Activated CD4-positive, alpha-beta T cell treated with anti-CD3 and anti-CD28 coated beads, Interleukin-2, amount 10 ng/mL, durations not matched to agents 24 days and 14 days (primary cell): ENCODE measurements at regions of chr3 and their contacts with region 1.

Region 1: DNA sequence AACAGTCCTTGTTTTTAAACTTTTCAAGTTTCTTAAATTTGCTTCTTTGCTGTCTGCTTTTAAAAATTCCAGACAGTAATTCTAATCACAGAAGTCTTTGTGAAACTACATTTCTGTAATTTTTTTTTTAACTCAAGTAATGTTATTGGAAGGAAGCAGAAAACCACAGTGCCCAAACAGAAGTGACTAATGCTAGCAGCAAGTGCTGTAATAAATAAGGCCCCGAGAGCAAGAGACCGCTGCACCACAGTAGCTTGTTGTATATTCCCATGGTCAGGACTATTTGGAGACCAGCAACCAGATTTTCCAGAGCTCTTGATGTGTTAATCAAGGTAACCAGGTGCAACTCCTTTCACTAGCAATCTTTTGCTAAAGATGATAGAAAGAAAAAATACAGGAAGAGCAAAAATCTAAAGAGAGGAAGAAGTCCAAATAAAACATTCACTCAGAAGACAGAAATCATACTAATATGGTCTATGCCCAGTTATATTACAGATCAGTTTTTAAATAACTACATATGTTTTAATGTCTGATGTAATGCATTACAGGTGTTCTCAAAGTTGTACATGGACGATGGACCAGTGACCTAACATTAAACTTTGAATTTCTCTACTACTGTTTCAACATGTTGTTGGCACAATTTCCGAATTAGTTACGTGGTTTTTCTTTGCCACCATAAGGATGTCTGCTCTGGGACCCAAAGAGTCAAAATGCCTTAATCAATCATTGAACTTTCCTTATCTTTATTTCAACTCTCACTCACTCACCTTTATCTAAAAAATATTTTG is 36.4 kb downstream of the WWTR1 start:
- DNase-seq: peak; percentile 62
- H3K4me3 Mint-ChIP-seq: peak overlapping the region; percentile 55
- H3K27ac Mint-ChIP-seq: peak overlapping the region; percentile 37
- H3K4me1 Mint-ChIP-seq: peaks cover 18% of the 10 kb centered on the region
- H3K27me3 Mint-ChIP-seq: peaks cover 13% of the 10 kb centered on the region

Region 2: DNA sequence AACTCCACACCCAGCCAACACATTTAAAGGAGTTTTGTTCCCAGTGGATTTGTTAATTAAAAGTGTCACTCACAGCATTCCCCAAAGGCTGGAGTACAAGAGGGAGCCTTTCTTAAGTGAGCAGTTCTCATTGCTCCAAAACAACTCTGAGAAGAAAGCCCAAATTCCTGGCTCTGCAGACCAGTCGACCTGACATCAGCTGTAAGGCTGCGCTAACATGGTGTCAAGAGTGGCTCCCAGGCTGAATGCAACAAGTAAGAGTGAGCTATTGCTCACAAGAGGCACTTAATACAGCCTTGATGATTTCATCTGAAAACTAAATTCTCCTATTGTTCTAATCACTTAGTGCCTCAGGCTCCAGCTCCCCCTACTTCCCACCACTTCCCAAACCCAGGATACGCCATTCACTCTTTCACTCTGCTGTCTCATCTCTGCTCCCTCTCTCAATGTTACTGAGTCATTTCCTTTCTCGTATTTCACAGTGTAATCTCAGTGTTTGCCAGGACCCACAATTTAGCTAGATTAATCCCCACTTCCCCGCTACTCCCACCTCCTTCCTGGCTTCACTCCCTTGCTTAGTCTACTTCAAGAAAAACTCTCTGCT is 45.3 kb before region 1 on chr3:
- intact Hi-C with region 1: loop called (anchors 1 kb)
- DNase-seq: no peak
- H3K4me3 Mint-ChIP-seq: no peak overlapping the region
- H3K27ac Mint-ChIP-seq: no peak overlapping the region
- H3K4me1 Mint-ChIP-seq: peaks cover 45% of the 10 kb centered on the region
- H3K27me3 Mint-ChIP-seq: no peaks in the 10 kb centered on the region

Region 3: DNA sequence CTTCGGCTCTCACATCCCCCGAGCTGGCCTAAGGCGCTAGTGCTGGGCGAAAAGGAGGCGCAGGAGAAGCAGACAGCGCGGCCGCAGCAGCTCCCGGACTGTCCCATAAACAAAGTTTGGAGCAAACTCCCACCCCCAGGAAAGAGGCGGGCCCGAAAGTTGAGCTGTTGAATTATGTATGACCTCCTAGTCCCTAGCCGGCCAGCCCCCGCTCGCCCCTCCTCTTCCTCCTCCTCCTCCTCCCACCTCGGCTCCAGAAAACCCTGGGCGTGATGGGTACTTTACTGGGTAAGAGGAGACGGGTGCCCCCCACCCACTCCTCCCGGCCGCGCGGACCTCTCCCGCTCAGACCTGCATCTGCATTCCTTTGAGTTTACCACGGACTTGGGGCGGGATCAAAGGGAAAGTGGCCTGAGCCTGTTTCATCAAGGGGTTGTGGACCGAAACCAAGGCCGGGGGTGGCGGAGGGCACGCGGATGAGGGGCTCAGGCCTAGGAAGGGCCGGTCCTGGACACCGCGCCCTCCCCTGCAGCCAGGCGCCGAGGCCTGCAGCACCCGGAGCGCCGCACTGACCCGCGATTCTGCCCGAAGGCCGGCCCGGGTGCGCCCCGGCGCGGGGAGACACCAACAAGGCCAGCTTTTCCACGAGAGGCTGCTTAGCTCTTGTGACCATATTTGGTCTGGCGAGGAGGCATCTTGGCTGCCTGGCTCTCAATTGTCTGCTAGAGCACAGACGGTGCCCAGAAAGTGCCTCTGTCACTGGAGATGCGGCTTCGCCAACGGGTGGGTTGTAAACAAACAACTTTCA is 36.7 kb after region 1 on chr3 and contains the start of gene WWTR1:
- intact Hi-C with region 1: loop called (anchors 2 kb)
- DNase-seq: peak; percentile 78
- H3K4me3 Mint-ChIP-seq: peak within 1 kb of the TSS; percentile 89
- H3K27ac Mint-ChIP-seq: peak within 1 kb of the TSS; percentile 74
- H3K4me1 Mint-ChIP-seq: peaks cover 13% of the 10 kb centered on the region
- H3K27me3 Mint-ChIP-seq: peaks cover 59% of the 10 kb centered on the region
- total RNA-seq, gene WWTR1: 0.31 and 0.75 TPM in 2 replicates

Region 4: DNA sequence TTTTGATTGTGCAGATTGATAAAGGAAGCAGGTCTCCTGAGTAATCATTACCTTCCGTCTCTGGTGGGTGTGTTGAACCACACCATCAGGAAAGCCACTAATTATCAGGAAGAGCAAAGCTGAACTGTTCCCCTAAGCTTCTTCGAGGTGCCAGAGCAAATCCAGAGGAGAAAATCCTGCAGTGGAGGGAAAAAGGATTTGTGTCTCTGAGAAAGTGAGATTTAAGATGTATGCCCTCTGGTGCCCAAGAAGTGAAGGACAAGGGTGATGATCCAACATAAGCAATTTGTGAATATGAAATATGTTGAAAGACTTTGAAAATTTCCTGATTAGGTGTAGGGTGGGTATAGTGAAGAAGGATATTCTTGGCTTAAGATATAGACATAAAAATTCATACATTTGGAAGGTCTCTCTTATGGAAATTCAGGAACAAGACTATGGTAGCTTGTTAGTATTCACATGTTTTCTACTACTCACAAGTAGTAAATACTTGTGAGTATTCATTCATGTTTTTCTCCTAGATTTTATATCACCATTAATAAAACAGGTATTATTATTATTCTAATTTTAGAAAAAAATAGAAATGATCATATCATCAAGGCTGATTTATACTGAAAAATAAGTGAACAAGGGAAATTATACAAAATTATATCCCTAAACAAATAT is 96.1 kb after region 1 on chr3:
- intact Hi-C with region 1: loop called (anchors 5 kb)
- DNase-seq: peak; percentile 77
- H3K4me3 Mint-ChIP-seq: no peak overlapping the region
- H3K27ac Mint-ChIP-seq: no peak overlapping the region
- H3K4me1 Mint-ChIP-seq: peaks cover 3% of the 10 kb centered on the region
- H3K27me3 Mint-ChIP-seq: peaks cover 7% of the 10 kb centered on the region